Activated naive CD4-positive, alpha-beta T cell treated with anti-CD3 and anti-CD28 coated beads for 36 hours (primary cell): ENCODE measurements at regions of chr14 and their contacts with region 1.

Region 1: DNA sequence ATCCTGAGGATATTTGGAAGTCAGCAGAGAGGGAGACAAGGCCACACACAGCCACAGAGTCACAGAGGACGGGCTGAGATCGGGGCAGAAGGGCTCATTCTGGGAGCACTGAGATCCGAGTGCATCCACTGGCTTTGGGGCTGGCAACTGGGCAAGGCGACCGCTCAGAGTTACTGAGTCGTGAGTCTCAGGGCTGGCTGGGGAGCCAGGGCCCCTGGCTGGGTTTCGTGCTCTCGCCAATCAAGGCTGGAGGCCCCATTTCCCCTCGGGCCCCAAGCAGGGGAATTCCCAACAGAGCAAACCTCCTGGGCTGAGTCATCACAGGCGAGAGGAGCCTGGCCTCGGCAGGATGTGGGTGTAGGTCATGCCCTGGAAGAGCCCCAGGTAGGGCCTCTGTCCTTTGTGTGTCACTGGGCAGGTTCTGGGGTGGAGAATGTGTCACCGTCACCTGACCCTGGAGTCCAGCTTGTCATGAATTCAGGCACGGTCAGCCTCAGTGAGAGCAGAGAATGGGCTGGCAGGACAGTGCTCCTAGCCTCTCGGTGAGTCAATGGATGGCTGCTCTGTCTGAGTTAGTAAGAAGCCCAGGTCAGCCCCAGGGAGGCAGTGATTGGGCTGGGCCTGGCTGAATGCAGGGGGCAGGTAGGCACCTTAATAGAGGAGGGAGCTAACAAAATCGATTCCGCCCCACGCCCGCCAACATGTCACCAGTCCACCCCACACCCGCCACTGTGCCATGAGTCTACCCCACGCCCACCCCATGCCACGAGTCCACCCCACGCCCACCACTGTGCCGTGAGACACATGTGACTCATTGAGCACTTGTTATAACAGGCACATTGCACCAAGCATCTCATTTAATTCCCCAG is 16.9 kb downstream of the ASB2 start:
- DNase-seq: peak; percentile 98
- H3K4me3 Mint-ChIP-seq: peak overlapping the region; percentile 68
- H3K27ac Mint-ChIP-seq: peak overlapping the region; percentile 99
- H3K4me1 Mint-ChIP-seq: peaks cover 95% of the 10 kb centered on the region
- H3K27me3 Mint-ChIP-seq: no peaks in the 10 kb centered on the region

Region 2: GRCh38 chr14:93206793-93207467 is 752.5 kb before region 1 on chr14 and contains the starts of genes GON7 and UBR7:
- CTCF ChIA-PET with region 1: no interaction called
- intact Hi-C with region 1: loop called (anchors 5 kb)
- DNase-seq: peak; percentile 95
- H3K4me3 Mint-ChIP-seq: peak within 1 kb of the TSS; percentile 92
- H3K27ac Mint-ChIP-seq: peak within 1 kb of the TSS; percentile 83
- H3K4me1 Mint-ChIP-seq: peaks cover 32% of the 10 kb centered on the region
- H3K27me3 Mint-ChIP-seq: no peaks in the 10 kb centered on the region
- total RNA-seq, gene GON7: 4.8 to 7.0 TPM
- total RNA-seq, gene UBR7: 43.0 to 45.0 TPM

Region 3: DNA sequence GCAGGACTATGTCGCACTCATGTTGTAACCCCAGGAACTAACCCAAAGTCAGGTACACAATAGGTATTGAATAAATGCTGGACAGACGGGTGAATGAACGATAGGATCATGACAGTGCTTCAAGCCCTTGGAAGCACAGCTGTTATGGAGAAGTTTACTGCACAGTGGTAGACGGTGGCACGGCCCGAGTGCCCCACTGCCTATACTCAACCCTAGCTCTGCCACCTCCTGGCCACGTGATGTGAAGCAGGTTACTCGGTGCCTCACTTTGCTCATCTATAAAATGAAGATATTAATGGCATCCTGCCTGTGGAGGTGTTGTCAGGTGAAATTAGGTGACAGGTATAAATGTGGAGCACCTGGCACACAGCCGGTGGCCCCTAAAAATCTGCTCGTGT is 11.1 kb after region 1 on chr14:
- CTCF ChIA-PET with region 1: interaction called, 36 read pairs
- intact Hi-C with region 1: loop called (anchors 1 kb)
- DNase-seq: peak; percentile 84
- H3K4me3 Mint-ChIP-seq: peak overlapping the region; percentile 71
- H3K27ac Mint-ChIP-seq: peak overlapping the region; percentile 85
- H3K4me1 Mint-ChIP-seq: peaks cover 47% of the 10 kb centered on the region
- H3K27me3 Mint-ChIP-seq: peaks cover 2% of the 10 kb centered on the region

Region 4: GRCh38 chr14:94080471-94081289 is 121.2 kb after region 1 on chr14 and contains the start of gene DDX24:
- CTCF ChIA-PET with region 1: no interaction called
- intact Hi-C with region 1: loop called (anchors 5 kb)
- DNase-seq: peak; percentile 98
- H3K4me3 Mint-ChIP-seq: peak within 1 kb of the TSS; percentile 98
- H3K27ac Mint-ChIP-seq: peak within 1 kb of the TSS; percentile 98
- H3K4me1 Mint-ChIP-seq: peaks cover 44% of the 10 kb centered on the region
- H3K27me3 Mint-ChIP-seq: no peaks in the 10 kb centered on the region
- total RNA-seq, gene DDX24: 190 to 200 TPM

Region 5: GRCh38 chr14:94392510-94392935 is 433.1 kb after region 1 on chr14:
- CTCF ChIA-PET with region 1: no interaction called
- intact Hi-C with region 1: loop called (anchors 5 kb)
- DNase-seq: peak; percentile 85
- H3K4me3 Mint-ChIP-seq: no peak overlapping the region
- H3K27ac Mint-ChIP-seq: peak overlapping the region; percentile 82
- H3K4me1 Mint-ChIP-seq: peaks cover 48% of the 10 kb centered on the region
- H3K27me3 Mint-ChIP-seq: no peaks in the 10 kb centered on the region